IMR-90 (cell line): ENCODE measurements at regions of chr15 and their contacts with region 1.

Region 1: DNA sequence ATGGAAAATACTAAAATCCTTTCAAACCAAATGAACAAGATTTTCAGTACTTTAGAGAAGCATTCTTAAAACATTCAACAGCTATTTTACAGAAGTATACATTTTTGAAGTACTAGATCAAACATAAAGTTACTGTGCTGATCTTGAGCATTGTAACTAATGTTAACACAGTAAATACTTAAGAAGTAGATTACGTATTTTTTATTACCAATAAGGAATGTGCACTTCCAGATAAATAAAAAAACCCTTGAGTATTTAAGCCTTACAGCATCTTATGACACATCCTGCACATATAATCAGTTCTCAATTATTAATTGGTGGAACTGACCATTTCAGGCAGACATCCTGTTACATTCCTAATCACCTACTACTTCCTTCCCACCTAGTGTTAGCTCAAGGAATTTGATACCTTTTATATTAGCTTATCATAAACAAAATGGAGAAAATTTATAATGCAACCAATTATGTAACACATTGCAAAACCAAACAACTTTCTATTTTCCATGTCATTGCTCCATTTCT is 32.8 kb downstream of the COPS2 start:
- DNase-seq: no peak
- ATAC-seq: no peak
- H3K4me3 ChIP-seq: no peak overlapping the region
- H3K27ac ChIP-seq: no peak overlapping the region
- H3K4me1 ChIP-seq: no peaks in the 10 kb centered on the region
- H3K27me3 ChIP-seq: no peaks in the 10 kb centered on the region
- CTCF ChIP-seq: no peak
- POLR2A ChIP-seq: no peak
- RAD21 ChIP-seq: no peak

Region 2: GRCh38 chr15:48996276-48996675 is 126.3 kb before region 1 on chr15:
- CTCF ChIA-PET with region 1: no interaction called
- POLR2A ChIA-PET with region 1: no interaction called
- dilution Hi-C with region 1: no loop called
- in situ Hi-C with region 1: no loop called
- intact Hi-C with region 1: loop called (anchors 5 kb)
- DNase-seq: peak; percentile 33
- ATAC-seq: peak; percentile 81
- H3K4me3 ChIP-seq: no peak overlapping the region
- H3K27ac ChIP-seq: no peak overlapping the region
- H3K4me1 ChIP-seq: peaks cover 2% of the 10 kb centered on the region; the same call in 1 of the 2 replicates
- H3K27me3 ChIP-seq: no peaks in the 10 kb centered on the region
- CTCF ChIP-seq: no peak
- POLR2A ChIP-seq: no peak
- RAD21 ChIP-seq: no peak

Region 3: DNA sequence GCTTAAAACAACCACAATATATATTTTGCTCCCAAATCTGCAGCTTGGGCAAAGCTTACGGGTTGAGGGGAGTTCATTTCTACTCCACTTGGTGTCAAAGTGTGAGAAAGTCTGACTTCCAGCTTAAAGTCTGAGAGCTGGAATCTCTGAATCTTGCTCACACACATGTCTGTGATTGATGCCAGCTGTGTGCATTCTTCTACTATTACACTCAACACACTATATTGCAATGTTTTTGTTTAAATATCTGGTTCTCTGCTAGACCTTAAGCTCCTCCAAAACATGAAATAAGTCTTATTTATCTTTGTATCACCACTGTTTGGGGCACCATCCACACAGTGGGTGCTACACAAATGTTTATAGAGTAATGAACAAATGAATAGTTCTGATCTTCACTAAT is 39.6 kb before region 1 on chr15:
- CTCF ChIA-PET with region 1: no interaction called
- POLR2A ChIA-PET with region 1: no interaction called
- dilution Hi-C with region 1: no loop called
- in situ Hi-C with region 1: no loop called
- intact Hi-C with region 1: no loop called
- DNase-seq: peak; percentile 93
- ATAC-seq: peak; percentile 87
- H3K4me3 ChIP-seq: no peak overlapping the region
- H3K27ac ChIP-seq: peak overlapping the region; percentile 36; the same call in 1 of the 2 replicates
- H3K4me1 ChIP-seq: peaks cover 19% of the 10 kb centered on the region
- H3K27me3 ChIP-seq: no peaks in the 10 kb centered on the region
- CTCF ChIP-seq: no peak
- POLR2A ChIP-seq: no peak
- RAD21 ChIP-seq: no peak

Region 4: DNA sequence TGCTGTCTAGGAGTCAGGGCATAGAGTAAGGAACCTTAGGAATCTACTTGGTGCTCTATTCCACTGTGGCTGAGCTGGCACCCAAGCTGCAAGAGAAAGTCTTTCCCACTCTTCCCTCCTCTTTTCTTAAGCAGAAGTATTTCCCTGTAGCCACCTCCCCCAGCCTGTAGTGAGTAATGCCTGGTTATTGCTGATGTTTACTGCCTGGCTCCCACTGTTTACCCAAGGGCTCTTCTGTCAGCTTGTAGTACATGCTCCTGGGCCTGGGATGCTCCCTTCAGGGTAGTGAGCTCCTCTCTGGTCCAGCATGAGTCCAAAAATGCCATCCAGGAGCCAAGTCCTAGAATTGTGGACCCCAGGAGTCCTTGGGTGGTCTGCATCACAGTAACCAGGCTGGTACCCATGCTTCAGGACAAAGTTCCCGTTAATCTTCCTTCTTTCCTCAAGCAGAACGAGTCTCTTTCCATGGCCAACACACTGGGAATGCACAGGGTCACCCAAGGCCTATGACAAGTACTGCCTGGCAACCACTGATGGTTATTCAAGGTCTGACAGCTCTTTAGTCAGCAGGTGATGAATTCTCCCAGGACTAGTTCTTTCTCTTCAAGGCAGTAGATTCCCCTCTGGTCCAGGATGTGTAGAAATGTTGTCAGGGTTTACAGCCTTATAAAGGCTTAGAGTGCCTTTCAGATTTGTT is 65.1 kb after region 1 on chr15:
- CTCF ChIA-PET with region 1: no interaction called
- POLR2A ChIA-PET with region 1: no interaction called
- dilution Hi-C with region 1: no loop called
- in situ Hi-C with region 1: no loop called
- intact Hi-C with region 1: no loop called
- DNase-seq: peak; percentile 76
- ATAC-seq: peak; percentile 100
- H3K4me3 ChIP-seq: no peak overlapping the region
- H3K27ac ChIP-seq: no peak overlapping the region
- H3K4me1 ChIP-seq: peaks cover 7% of the 10 kb centered on the region
- H3K27me3 ChIP-seq: no peaks in the 10 kb centered on the region
- CTCF ChIP-seq: no peak
- POLR2A ChIP-seq: no peak
- RAD21 ChIP-seq: no peak